ENCODE measurements at regions of chr4 and their contacts with region 1.

Region 1: DNA sequence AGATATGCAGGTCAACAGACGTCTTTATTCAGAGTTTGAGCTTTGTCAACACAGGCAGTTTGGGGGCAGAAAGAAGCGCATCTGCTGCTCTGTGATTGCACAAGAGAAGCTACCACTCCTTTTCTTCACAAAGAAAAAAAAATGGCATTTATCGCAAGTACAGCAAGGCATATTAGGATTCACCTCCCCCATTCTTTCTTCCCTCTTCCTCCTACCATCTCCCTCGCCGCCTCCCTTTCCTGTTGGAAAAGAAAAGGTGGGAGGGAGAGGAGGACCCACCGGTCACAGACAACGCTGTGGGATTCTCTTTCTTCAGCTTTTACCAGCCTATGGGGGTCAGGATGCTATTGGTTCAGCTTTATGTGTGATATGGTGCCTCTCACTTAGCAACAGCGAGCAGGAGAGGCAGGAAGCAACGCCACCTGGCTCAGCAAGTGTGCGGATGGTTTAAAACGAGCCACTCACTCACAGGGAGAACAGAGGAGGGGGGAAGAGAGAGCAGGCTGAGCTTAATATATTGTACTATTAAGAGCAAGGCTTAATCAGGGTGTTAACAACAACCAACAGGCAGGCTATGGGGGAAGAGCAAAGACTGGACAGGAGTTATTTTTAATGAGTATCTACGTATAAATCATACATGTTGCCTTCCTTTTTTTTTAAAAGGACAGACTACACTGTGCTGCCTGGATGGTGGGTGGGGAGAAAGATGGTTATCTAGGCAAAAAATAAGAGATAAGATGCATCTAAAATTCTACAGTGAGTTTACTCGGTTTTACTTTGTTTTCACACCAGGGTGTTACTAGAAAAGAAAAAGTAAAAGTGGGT is 104.7 kb downstream of the MAML3 start:
- DNase-seq: peak; percentile 76 to 80
- H3K4me3 ChIP-seq: peak overlapping the region; percentile 21
- H3K4me3 Mint-ChIP-seq: peak overlapping the region; percentile 79
- H3K27ac Mint-ChIP-seq: peak overlapping the region; percentile 96
- H3K4me1 ChIP-seq: peaks cover 58% of the 10 kb centered on the region
- H3K4me1 Mint-ChIP-seq: peaks cover 51% of the 10 kb centered on the region
- H3K27me3 ChIP-seq: no peaks in the 10 kb centered on the region
- H3K27me3 Mint-ChIP-seq: no peaks in the 10 kb centered on the region
- CTCF ChIP-seq: peak in 1 of 2 experiments; percentile 44

Region 2: GRCh38 chr4:139734875-139735380 is 314.3 kb before region 1 on chr4:
- CTCF ChIA-PET with region 1: interaction called, 4 read pairs
- POLR2A ChIA-PET with region 1: no interaction called
- intact Hi-C with region 1: loop called (anchors 2 kb)
- DNase-seq: peak; percentile 82 to 89
- H3K4me3 ChIP-seq: peak overlapping the region; percentile 29
- H3K4me3 Mint-ChIP-seq: peak overlapping the region; percentile 69
- H3K27ac Mint-ChIP-seq: peak overlapping the region; percentile 78
- H3K4me1 ChIP-seq: peaks cover 39% of the 10 kb centered on the region
- H3K4me1 Mint-ChIP-seq: peaks cover 22% of the 10 kb centered on the region
- H3K27me3 ChIP-seq: no peaks in the 10 kb centered on the region
- H3K27me3 Mint-ChIP-seq: no peaks in the 10 kb centered on the region
- CTCF ChIP-seq: peak; percentile 76 to 82

Region 3: DNA sequence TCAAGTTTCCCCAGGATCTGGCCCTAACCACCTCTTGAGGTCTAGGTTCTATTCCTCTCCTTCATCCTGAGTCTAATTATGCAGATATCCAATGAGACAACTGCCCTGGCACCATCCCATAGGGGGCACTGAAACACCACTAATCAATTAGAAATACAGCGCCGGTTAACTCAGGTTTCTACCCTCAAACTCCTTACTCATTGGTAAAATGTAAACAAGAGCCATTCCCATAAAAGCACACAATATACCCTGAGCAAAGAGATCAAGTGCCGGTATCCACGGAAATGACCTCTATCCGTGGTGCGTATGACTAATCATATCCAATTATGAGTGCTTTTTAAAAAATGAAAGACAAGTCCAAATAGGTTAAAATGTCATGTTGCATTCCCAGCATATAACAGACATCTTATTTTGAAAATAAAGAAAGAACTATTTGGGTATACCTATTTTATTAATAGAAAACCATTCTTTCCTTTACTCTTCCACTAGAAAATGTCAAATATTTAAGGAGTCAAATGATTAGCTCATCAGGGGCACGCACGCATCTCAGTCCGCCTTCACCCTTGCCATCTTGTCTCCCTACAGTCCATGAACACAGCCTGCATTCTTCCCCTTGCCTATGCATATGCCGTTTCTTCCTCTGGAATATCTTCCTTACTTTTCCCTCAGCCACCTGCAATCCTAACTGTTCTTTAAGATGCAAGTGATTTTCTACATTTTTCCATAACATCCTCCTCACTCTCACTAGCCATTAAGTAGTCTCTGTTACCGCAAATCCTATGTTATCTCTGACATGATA is 36.3 kb before region 1 on chr4:
- CTCF ChIA-PET with region 1: interaction called, 9 read pairs
- POLR2A ChIA-PET with region 1: interaction called, 4 read pairs
- intact Hi-C with region 1: loop called (anchors 1 kb)
- DNase-seq: peak; percentile 69 to 77
- H3K4me3 ChIP-seq: no peak overlapping the region
- H3K4me3 Mint-ChIP-seq: peak overlapping the region; percentile 0
- H3K27ac Mint-ChIP-seq: peak overlapping the region; percentile 23
- H3K4me1 ChIP-seq: peaks cover 18% of the 10 kb centered on the region
- H3K4me1 Mint-ChIP-seq: peaks cover 30% of the 10 kb centered on the region
- H3K27me3 ChIP-seq: no peaks in the 10 kb centered on the region
- H3K27me3 Mint-ChIP-seq: no peaks in the 10 kb centered on the region
- CTCF ChIP-seq: peak; percentile 56 to 65

Region 4: DNA sequence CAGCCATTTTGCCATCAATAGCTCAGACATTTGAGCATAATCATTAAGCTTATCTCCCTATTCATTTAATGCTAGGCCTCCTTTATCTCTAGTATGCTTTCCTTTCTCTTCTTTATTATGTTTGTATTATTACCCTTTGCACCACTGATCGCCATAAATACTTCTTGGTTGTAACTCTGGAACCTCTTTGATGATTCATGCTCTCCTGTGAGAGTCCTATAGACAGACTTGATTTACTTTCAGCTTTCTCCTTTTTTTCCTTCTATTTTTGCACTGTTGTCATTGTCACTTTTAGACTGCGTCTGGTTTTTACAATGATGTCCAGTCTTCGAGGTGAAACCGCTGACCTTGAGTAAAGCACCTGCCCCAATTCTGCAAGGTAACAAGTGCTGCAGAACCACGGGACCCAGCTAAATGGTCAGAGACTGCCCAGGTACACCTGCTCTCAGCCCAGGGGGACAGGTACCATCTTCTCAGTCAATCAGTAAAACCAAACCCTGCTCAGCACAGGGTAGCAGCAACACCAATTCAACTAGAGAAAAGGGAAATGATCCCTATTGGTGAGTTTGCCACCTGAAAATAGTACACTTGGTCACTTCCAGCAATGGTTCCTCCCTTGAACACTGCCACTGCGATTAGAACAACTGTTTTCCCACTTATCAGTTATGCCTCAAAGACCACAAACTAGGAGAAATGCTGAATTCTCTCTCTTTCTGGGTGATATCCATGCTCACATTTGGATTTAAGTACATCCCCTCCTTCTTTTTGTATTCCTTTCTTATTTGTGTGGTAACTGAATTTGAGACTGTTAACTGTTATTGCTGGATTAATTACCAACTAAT is 20.3 kb before region 1 on chr4:
- CTCF ChIA-PET with region 1: interaction called, 11 read pairs
- POLR2A ChIA-PET with region 1: interaction called, 8 read pairs
- intact Hi-C with region 1: no loop called
- DNase-seq: peak in 1 of 2 experiments; percentile 55
- H3K4me3 ChIP-seq: no peak overlapping the region
- H3K4me3 Mint-ChIP-seq: peak overlapping the region; percentile 70
- H3K27ac Mint-ChIP-seq: peak overlapping the region; percentile 95
- H3K4me1 ChIP-seq: peaks cover 58% of the 10 kb centered on the region
- H3K4me1 Mint-ChIP-seq: peaks cover 50% of the 10 kb centered on the region
- H3K27me3 ChIP-seq: no peaks in the 10 kb centered on the region
- H3K27me3 Mint-ChIP-seq: no peaks in the 10 kb centered on the region
- CTCF ChIP-seq: no peak

Region 5: GRCh38 chr4:140085062-140085622 is 35.9 kb after region 1 on chr4:
- CTCF ChIA-PET with region 1: interaction called, 3 read pairs
- POLR2A ChIA-PET with region 1: no interaction called
- intact Hi-C with region 1: loop called (anchors 5 kb)
- DNase-seq: peak; percentile 70 to 75
- H3K4me3 ChIP-seq: no peak overlapping the region
- H3K4me3 Mint-ChIP-seq: peak overlapping the region; percentile 56
- H3K27ac Mint-ChIP-seq: peak overlapping the region; percentile 82
- H3K4me1 ChIP-seq: peaks cover 61% of the 10 kb centered on the region
- H3K4me1 Mint-ChIP-seq: peaks cover 69% of the 10 kb centered on the region
- H3K27me3 ChIP-seq: no peaks in the 10 kb centered on the region
- H3K27me3 Mint-ChIP-seq: no peaks in the 10 kb centered on the region
- CTCF ChIP-seq: no peak

Region 6: DNA sequence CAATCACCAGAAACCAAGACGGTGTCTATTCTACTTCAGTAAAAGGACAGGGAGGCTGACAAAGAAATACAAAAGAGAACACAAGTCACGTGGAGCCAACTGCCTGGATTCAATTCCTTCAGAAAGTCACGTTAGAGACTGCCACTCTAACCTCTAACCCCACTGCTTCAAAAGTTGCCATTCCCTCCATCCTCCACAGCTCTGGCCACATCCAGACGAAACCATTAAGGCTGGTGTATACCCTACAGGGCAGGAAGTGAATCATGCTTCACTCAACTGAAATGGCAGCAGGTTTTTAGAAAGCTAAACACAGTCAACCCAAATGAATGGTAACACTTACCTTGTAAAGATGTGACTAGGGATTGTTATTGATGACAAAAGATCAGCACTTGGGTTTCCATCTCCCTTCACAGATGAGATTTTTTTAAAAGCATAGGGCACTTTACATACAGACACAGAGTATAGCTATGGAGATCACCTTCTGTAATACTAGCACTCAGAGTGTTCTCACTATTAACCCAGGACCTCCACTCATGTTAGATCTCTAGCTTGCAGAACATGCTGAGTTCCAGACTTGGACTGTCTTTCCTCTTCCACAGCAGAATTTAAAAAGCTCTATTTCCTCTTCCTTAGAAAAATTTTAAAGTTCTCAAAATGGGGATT is 67.3 kb after region 1 on chr4:
- CTCF ChIA-PET with region 1: no interaction called
- POLR2A ChIA-PET with region 1: no interaction called
- intact Hi-C with region 1: no loop called
- DNase-seq: no peak
- H3K4me3 ChIP-seq: no peak overlapping the region
- H3K4me3 Mint-ChIP-seq: no peak overlapping the region
- H3K27ac Mint-ChIP-seq: no peak overlapping the region
- H3K4me1 ChIP-seq: peaks cover 6% of the 10 kb centered on the region
- H3K4me1 Mint-ChIP-seq: peaks cover 9% of the 10 kb centered on the region
- H3K27me3 ChIP-seq: no peaks in the 10 kb centered on the region
- H3K27me3 Mint-ChIP-seq: no peaks in the 10 kb centered on the region
- CTCF ChIP-seq: no peak

Region 7: DNA sequence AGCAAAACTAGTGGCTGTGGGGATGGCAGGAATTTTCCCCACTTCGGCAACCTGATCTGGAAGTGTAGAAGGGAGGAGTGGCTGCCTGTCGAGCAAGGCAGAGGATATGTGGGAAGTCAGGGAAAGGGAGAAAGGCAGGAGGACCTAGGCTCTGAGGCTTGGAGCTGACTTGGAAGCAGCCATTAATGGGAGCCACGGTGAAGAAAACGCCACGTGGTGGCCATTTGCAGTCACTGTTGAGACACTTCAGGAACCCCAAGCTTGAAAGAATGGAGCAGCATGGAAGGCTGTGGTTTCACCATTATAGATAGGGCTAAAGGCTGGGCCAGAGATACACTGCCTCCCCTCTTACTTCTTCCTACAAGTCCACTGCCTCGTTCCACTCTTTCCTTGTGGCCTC is 146.6 kb after region 1 on chr4:
- CTCF ChIA-PET with region 1: no interaction called
- POLR2A ChIA-PET with region 1: no interaction called
- intact Hi-C with region 1: no loop called
- DNase-seq: no peak
- H3K4me3 ChIP-seq: no peak overlapping the region
- H3K4me3 Mint-ChIP-seq: no peak overlapping the region
- H3K27ac Mint-ChIP-seq: no peak overlapping the region
- H3K4me1 ChIP-seq: no peaks in the 10 kb centered on the region
- H3K4me1 Mint-ChIP-seq: no peaks in the 10 kb centered on the region
- H3K27me3 ChIP-seq: no peaks in the 10 kb centered on the region
- H3K27me3 Mint-ChIP-seq: peaks cover 4% of the 10 kb centered on the region
- CTCF ChIP-seq: no peak

Region 8: DNA sequence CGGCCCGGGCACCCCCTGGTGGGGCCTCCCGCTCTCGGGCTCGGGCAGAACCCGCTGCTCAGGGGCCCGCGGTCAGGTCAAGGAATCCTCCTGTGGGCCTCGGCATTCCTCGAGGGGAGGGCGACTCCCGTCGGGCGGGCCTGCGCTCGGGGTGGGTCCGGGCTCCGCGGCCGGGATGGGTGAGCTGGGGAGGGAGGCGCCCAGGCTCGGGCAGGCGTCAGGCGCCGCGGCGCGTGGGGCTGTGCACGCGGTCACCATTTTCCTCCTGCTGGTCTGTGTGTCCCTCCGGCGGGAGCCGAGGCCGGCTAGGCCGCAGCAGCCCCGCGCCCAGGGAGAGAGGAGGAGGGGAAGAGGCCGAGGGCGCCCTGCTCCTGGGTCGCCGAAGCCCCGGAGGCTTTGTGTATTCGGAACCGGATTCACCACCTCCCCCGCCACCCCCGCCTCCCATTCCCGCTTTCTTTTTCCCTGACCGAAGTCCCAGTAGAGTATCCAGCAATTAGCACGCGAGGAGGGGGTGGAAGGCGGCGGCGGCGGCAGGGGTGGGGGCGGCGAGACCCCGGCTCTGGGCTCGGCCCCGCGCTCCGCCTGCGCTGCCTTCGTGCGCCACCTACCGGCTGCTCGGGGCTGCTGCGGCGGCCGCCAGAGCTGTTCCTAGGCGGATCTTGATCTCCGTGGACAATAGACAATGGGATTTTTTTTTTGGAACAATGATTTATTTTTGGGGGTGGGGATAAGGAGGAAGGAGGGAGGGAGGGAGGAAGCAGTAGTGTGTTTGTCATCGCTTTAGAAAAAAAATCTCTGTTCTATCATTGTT is 203.7 kb after region 1 on chr4:
- CTCF ChIA-PET with region 1: interaction called, 5 read pairs
- POLR2A ChIA-PET with region 1: interaction called, 7 read pairs
- intact Hi-C with region 1: loop called (anchors 1 kb)
- DNase-seq: peak; percentile 82 to 87
- H3K4me3 ChIP-seq: peak overlapping the region; percentile 66
- H3K4me3 Mint-ChIP-seq: peak overlapping the region; percentile 0
- H3K27ac Mint-ChIP-seq: peak overlapping the region; percentile 88
- H3K4me1 ChIP-seq: peaks cover 58% of the 10 kb centered on the region
- H3K4me1 Mint-ChIP-seq: peaks cover 26% of the 10 kb centered on the region
- H3K27me3 ChIP-seq: no peaks in the 10 kb centered on the region
- H3K27me3 Mint-ChIP-seq: no peaks in the 10 kb centered on the region
- CTCF ChIP-seq: peak; percentile 79 to 90

Measured in Caco-2 (cell line).